ENCODE measurements at regions of chr21 and their contacts with region 1.

Region 1: GRCh38 chr21:41678944-41679343 is 87.9 kb downstream of the RIPK4 start:
- DNase-seq: peak; percentile 94
- H3K4me3 Mint-ChIP-seq: peak overlapping the region; percentile 50
- H3K27ac Mint-ChIP-seq: peak overlapping the region; percentile 85
- H3K4me1 Mint-ChIP-seq: peaks cover 54% of the 10 kb centered on the region
- H3K27me3 Mint-ChIP-seq: no peaks in the 10 kb centered on the region
- CTCF ChIP-seq: no peak

Region 2: GRCh38 chr21:41488080-41488479 is 190.9 kb before region 1 on chr21:
- CTCF ChIA-PET with region 1: no interaction called
- intact Hi-C with region 1: no loop called
- DNase-seq: no peak
- H3K4me3 Mint-ChIP-seq: no peak overlapping the region
- H3K27ac Mint-ChIP-seq: no peak overlapping the region
- H3K4me1 Mint-ChIP-seq: no peaks in the 10 kb centered on the region
- H3K27me3 Mint-ChIP-seq: no peaks in the 10 kb centered on the region
- CTCF ChIP-seq: no peak

Region 3: DNA sequence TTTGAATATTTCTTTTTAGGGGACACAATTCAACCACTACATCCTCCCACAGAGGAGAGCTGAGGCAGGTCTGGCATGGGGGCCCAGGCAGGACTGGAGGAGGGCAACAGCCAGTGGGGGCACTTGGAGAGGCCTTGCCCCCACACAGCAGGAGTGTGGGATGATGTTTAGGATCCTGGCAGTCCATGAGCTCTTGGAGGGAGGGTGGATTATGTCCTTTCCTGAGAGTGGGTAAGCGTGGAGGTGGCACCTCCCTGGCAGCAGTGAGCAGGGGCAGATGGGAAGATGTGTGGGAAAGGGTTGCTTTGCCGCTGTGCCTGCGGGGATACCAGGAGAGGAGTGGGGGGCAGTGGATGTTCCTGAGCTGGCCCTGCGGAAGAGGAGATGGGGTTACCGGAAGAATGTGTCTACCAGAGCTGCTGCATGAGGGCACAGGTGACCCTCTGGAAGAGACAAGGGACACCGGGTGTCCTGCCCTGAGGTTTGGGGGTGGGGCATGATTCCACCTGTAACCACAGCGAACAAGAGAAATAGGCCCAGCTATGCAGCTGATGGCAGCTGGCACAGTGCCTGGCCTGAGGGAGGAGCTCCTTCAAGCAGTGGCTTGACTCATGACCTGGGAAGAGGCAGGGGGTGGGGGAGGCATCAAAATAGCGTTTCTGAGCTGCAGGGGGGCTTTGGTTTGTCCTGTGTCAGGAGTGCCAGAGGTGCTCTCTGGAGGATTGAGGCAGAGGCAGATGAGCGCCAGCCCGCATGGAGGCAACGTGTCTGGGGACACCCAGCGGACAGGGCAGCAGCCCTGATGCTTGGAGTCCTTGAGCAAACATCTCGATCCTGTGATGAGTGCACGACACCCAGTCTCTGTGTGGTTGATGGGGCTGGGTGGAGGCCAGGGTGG is 47.1 kb before region 1 on chr21:
- CTCF ChIA-PET with region 1: interaction called, 4 read pairs
- intact Hi-C with region 1: loop called (anchors 1 kb)
- DNase-seq: peak; percentile 82
- H3K4me3 Mint-ChIP-seq: peak overlapping the region; percentile 36
- H3K27ac Mint-ChIP-seq: peak overlapping the region; percentile 78
- H3K4me1 Mint-ChIP-seq: peaks cover 45% of the 10 kb centered on the region
- H3K27me3 Mint-ChIP-seq: no peaks in the 10 kb centered on the region
- CTCF ChIP-seq: no peak

Region 4: DNA sequence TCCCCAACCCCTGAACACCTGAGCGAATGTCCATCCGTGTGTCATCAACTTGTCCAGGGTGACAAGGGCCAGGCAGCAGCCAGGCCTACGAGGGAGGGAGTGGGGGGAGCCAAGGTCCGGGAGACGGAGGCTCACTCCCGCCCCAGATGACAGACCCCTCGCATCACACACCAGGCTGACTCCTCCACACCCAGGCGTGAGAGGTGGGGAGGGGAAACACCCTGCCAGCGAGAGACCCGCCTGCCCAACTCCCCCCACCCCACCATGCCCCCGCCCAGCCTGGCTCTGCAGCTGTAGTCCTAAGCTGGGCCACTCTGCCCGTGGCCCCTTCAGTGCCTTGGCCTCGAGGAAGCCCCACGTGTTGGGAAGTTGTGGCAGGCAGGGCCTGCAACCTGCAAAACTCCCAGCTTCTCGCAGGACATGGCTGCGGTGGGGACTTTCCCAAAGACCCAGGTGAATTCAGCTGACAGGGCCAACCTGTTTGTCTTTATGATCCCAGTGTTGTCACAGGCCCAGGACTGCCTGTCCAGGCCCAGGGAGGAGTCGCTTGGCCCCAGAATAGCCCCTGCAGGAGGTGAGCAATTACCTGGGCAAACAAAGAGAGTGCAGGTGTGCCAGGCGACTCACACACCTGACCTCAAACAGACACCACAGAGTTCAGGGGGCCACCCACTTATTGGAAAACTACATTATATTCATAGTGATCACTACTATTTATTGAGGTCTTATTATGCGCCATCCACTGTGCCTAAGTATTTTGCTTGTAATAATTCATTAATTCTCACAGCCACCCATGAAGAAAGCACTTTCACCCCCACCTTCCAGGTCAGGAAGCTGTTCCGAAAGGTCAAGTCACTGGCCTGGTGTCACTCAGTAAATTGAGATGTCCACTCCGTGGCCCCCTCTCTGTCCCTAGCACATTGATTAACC is 25.2 kb after region 1 on chr21:
- CTCF ChIA-PET with region 1: interaction called, 4 read pairs
- intact Hi-C with region 1: loop called (anchors 1 kb)
- DNase-seq: peak; percentile 86
- H3K4me3 Mint-ChIP-seq: no peak overlapping the region
- H3K27ac Mint-ChIP-seq: no peak overlapping the region
- H3K4me1 Mint-ChIP-seq: peaks cover 52% of the 10 kb centered on the region
- H3K27me3 Mint-ChIP-seq: no peaks in the 10 kb centered on the region
- CTCF ChIP-seq: no peak

Region 5: GRCh38 chr21:41715649-41716281 is 36.8 kb after region 1 on chr21:
- CTCF ChIA-PET with region 1: interaction called, 6 read pairs
- intact Hi-C with region 1: loop called (anchors 5 kb)
- DNase-seq: peak; percentile 84
- H3K4me3 Mint-ChIP-seq: peak overlapping the region; percentile 21
- H3K27ac Mint-ChIP-seq: peak overlapping the region; percentile 82
- H3K4me1 Mint-ChIP-seq: peaks cover 48% of the 10 kb centered on the region
- H3K27me3 Mint-ChIP-seq: no peaks in the 10 kb centered on the region
- CTCF ChIP-seq: no peak

Region 6: GRCh38 chr21:41768437-41769061 is 89.6 kb after region 1 on chr21:
- CTCF ChIA-PET with region 1: interaction called, 9 read pairs
- intact Hi-C with region 1: loop called (anchors 2 kb)
- DNase-seq: peak; percentile 73
- H3K4me3 Mint-ChIP-seq: peak overlapping the region; percentile 76
- H3K27ac Mint-ChIP-seq: peak overlapping the region; percentile 96
- H3K4me1 Mint-ChIP-seq: peaks cover 33% of the 10 kb centered on the region
- H3K27me3 Mint-ChIP-seq: no peaks in the 10 kb centered on the region
- CTCF ChIP-seq: peak; percentile 29

Measured in Calu3 (cell line).